GM10248 (cell line): ENCODE measurements at regions of chr1 and their contacts with region 1.

Region 1: DNA sequence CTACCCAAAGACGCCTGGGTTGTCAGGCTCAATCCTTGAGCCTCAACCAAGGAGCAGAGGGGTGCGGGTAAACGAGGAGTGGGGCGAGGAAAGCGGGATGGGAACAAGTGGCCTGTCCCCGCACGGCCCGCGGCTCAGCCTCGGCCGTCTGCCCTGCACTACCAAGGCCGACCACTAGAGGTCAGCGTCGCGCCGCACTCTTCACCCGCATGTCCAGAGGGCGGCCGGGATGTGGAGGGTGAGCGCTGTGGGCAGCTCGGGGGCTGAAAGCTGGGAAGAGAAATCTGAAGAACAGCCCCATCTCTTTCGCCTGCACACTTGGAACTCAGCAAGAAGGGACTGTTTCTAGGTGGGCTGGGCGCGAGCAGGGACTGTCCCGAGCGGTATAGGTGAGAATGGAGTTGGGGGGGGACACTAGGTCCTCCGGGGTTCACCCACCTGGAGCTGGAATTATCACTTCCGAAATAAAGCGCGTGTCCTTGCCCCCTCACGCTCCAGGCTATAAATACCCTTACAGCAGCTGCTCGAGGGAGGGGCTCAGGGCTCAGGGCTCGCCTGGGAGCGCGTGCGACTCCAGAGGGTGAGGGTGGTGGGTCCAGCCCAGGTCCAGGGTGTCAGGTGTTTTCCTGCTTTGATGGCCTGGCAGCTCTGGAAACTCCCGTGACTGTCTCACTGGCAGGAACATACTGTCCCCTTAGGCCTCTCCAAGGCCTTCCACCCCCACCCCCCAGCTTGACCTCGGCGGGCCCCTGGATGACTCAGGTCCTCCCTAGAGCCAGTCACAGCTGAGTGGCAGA is 9.8 kb downstream of the SLC30A2 start:
- DNase-seq: peak; percentile 92
- CTCF ChIP-seq: peak; percentile 99

Region 2: GRCh38 chr1:26015358-26015757 is 20.8 kb before region 1 on chr1:
- CTCF ChIA-PET with region 1: interaction called, 15 read pairs
- POLR2A ChIA-PET with region 1: no interaction called
- DNase-seq: no peak
- CTCF ChIP-seq: no peak

Region 3: GRCh38 chr1:27087371-27088220 is 1051.4 kb after region 1 on chr1:
- CTCF ChIA-PET with region 1: no interaction called
- POLR2A ChIA-PET with region 1: no interaction called
- DNase-seq: no peak
- CTCF ChIP-seq: no peak